Breast epithelium (tissue), 4 donors: ENCODE measurements at regions of chrX and their contacts with region 1.

Region 1: DNA sequence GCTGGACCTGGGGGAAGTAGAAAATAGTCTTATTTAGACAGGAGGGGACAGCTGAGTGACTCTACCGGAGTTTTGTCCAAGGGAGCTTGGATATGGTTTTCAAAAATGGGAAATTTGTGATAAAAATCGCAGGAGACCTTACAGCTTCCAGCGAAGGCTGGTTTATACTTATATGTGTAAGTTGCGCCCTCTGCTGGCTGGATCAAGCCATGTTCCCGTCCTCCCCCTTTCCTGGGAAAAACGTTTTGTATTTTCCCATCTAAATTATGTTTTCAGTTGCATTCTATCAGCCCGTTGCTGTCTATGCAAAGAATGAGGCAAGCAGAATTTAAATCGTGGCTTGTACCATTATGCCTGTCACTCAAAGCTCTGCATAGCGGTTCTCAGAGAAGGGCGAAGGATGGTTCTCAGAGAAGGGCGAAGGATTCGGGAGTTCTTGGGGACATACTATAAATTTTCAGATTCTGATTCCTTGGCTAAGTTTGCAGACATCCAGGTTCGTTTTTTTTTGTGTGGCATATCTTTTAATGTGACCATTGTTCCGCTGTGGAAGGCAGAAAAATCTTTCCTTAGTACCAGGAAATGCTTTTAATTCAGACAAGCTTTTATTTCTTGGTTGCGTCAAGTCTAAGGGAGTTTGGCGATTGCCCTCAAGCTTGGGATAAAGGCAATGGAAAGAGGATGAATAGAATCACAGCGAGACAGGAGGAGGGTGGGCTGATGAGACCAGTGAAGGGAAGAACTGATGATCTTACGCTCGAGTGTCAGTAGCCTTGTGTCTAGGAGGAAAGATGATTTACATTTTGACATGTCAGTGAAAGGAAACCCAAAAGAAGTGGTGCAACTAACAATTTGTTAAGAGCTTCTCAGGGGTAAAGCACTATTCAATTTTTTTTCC is 128.5 kb upstream of the ARX start:
- DNase-seq: peak; percentile 19 to 51
- H3K4me3 ChIP-seq: peak overlapping the region in 1 of 3 donors; percentile 28
- H3K27ac ChIP-seq: no peak overlapping the region
- H3K4me1 ChIP-seq: no peaks in the 10 kb centered on the region
- H3K27me3 ChIP-seq: peaks cover 0 to 47% of the 10 kb centered on the region in 2 donors
- CTCF ChIP-seq: peak in 2 of 3 donors; percentile 46 to 48
- POLR2A ChIP-seq: no peak

Region 2: DNA sequence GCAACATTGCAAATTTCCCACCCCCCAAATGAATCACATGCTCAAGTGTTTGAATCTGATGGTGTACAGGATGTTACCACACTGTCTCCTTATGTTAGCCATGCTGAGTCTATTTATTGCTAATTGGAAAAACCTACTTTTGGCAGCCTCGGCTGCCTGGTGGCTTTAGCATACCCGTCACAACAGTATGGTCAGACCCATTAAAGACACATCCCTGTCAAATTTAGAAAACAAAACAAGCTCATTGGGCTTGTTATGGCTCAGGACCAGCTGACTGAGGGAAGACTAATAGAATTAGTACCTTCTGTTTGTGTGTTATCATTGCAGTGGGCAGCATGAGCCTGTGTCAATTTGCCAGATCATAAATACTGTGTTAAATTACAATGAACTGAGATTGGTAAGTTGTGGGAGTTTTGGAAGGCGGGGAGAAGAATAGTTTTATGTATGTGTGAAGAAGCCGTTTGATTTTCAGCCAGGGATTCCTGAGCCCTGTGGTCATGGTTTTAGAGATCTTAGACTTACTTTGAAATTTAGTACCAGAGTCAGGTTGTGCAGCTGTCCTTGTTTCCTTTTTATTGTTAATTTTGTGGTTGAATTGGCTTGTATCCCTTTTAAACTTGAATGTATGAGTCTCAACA is 383.8 kb before region 1 on chrX:
- intact Hi-C with region 1: loop called (anchors 5 kb)
- DNase-seq: no peak
- H3K4me3 ChIP-seq: no peak overlapping the region
- H3K27ac ChIP-seq: no peak overlapping the region
- H3K4me1 ChIP-seq: no peaks in the 10 kb centered on the region
- H3K27me3 ChIP-seq: peaks cover 0 to 10% of the 10 kb centered on the region in 2 donors
- CTCF ChIP-seq: no peak
- POLR2A ChIP-seq: no peak

Region 3: GRCh38 chrX:25108481-25108880 is 35.8 kb before region 1 on chrX:
- intact Hi-C with region 1: no loop called
- DNase-seq: no peak
- H3K4me3 ChIP-seq: no peak overlapping the region
- H3K27ac ChIP-seq: no peak overlapping the region
- H3K4me1 ChIP-seq: no peaks in the 10 kb centered on the region
- H3K27me3 ChIP-seq: peaks cover 0 to 4% of the 10 kb centered on the region in 2 donors
- CTCF ChIP-seq: no peak
- POLR2A ChIP-seq: no peak